Caco-2 (cell line): ENCODE measurements at regions of chr16 and their contacts with region 1.

Region 1: DNA sequence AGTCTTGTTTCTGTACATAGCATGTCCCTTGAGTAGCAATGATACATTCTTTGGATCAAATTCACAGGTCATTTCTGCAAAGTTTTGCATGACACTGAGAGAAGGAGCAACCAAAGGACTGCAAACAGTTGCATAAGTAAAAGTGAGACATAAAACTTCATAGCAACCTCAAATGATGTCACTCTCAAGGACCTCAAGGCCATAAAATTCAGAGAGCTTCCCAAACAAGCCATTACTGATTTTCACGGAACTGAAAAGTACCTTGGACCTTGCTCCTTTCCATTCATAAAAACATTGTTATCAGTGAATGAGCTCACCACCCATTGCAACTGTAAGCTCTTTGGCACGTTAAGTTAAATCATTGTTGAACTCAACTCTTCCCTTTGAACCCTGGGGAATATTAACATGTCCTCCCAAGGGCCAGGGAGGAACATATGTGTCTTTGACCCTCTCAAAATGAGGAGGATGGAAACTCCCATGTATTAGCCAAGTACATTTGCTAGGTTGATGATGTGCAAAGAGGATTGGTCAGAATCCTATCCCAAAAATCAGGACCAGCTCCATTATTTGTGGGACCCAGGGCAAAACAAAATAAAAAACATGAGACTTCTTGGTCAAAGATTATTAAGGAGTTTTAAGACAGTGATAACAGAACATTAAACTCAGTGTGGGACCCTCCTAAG is 275.0 kb upstream of the DYNLRB2 start:
- DNase-seq: peak; percentile 69 to 84
- H3K4me3 ChIP-seq: no peak overlapping the region
- H3K4me3 Mint-ChIP-seq: peak overlapping the region; percentile 71
- H3K27ac Mint-ChIP-seq: peak overlapping the region; percentile 96
- H3K4me1 ChIP-seq: peaks cover 47% of the 10 kb centered on the region
- H3K4me1 Mint-ChIP-seq: peaks cover 45% of the 10 kb centered on the region
- H3K27me3 ChIP-seq: no peaks in the 10 kb centered on the region
- H3K27me3 Mint-ChIP-seq: no peaks in the 10 kb centered on the region
- CTCF ChIP-seq: no peak

Region 2: DNA sequence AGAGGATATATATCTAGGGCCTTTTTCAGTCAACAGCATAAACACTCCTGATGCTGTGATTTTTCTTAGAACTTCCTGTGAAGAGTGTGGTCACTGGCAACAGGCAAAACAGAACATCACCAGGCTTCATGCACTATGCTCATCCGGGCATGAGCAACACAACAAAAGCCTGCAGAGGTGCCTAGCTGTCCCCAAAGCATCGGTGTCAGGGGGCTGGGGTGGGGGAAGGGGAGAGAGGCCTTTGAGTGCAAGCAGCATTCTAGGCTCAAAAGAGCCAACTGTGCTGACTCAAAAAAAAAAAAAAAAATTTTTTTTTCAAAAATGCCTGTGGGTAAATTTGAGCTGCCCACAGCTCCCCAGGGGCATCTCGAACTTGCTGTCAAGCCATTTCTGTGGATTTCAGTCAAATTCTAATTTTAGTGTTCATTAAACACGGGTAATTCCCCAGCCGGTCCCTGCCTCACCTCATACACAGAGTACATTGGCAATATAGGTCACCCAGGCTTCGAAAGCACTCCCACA is 80.4 kb after region 1 on chr16:
- CTCF ChIA-PET with region 1: interaction called, 5 read pairs
- POLR2A ChIA-PET with region 1: no interaction called
- intact Hi-C with region 1: loop called (anchors 1 kb)
- DNase-seq: no peak
- H3K4me3 ChIP-seq: no peak overlapping the region
- H3K4me3 Mint-ChIP-seq: no peak overlapping the region
- H3K27ac Mint-ChIP-seq: no peak overlapping the region
- H3K4me1 ChIP-seq: peaks cover 46% of the 10 kb centered on the region
- H3K4me1 Mint-ChIP-seq: peaks cover 23% of the 10 kb centered on the region
- H3K27me3 ChIP-seq: no peaks in the 10 kb centered on the region
- H3K27me3 Mint-ChIP-seq: no peaks in the 10 kb centered on the region
- CTCF ChIP-seq: no peak